Ovary (tissue), 10 donors: ENCODE measurements at regions of chr11 and their contacts with region 1.

Region 1: GRCh38 chr11:68927280-68928135 is 23.8 kb downstream of the IGHMBP2 start:
- DNase-seq: peak in 4 of 5 donors; percentile 46 to 54 (median 52)
- H3K4me3 ChIP-seq: no peak overlapping the region
- H3K27ac ChIP-seq: peak overlapping the region in 1 of 2 donors; percentile 11
- H3K4me1 ChIP-seq: no peaks in the 10 kb centered on the region
- H3K27me3 ChIP-seq: no peaks in the 10 kb centered on the region
- CTCF ChIP-seq: no peak
- EP300 ChIP-seq: no peak
- POLR2A ChIP-seq: no peak

Region 2: DNA sequence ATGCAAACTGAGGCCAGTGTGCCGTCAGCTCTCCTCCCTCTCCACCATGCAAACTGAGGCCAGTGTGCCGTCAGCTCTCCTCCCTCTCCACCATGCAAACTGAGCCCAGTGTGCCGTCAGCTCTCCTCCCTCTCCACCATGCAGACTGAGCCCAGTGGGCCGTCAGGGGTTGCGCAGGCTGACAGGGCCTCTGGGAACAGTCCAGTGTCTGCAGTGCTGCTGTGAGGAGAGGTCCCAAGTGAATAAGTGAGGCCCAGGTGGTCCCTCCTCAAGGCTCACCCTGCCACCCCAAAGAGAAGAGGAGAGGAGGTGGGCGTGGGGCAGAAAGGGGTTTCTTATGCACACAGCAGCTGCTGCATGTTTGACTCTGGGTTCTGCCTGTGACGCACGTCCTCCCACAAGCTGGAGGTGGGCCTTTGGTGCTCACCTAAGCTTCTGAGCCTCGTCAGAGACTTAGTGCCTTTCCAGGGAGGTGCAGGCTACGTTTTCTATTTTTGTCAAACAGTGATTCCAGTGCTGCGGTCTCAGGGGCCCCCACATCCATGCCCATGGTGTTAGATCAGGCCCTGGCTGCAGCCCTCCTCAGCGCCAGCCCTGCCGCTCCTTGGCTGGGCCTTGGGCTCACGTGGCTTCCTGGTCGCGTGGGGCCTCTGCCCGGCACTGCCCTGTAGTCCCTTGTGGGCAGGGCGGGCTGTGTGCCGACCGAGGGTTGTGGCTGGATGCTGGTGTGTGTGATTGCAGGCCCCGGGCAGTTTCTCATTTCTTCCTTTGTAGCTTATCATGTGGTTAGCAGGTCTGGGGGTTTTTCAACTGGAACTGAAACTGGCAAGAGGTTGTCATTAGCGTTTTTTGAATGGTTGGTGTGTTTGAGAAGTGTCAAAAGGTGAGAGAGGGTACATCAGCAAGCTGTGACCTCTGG is 128.3 kb after region 1 on chr11:
- intact Hi-C with region 1: loop called in 1 of 4 experiments (anchors 10 kb)
- DNase-seq: no peak
- H3K4me3 ChIP-seq: no peak overlapping the region
- H3K27ac ChIP-seq: no peak overlapping the region
- H3K4me1 ChIP-seq: peaks cover 6% of the 10 kb centered on the region
- H3K27me3 ChIP-seq: no peaks in the 10 kb centered on the region
- CTCF ChIP-seq: no peak
- EP300 ChIP-seq: no peak
- POLR2A ChIP-seq: no peak

Region 3: DNA sequence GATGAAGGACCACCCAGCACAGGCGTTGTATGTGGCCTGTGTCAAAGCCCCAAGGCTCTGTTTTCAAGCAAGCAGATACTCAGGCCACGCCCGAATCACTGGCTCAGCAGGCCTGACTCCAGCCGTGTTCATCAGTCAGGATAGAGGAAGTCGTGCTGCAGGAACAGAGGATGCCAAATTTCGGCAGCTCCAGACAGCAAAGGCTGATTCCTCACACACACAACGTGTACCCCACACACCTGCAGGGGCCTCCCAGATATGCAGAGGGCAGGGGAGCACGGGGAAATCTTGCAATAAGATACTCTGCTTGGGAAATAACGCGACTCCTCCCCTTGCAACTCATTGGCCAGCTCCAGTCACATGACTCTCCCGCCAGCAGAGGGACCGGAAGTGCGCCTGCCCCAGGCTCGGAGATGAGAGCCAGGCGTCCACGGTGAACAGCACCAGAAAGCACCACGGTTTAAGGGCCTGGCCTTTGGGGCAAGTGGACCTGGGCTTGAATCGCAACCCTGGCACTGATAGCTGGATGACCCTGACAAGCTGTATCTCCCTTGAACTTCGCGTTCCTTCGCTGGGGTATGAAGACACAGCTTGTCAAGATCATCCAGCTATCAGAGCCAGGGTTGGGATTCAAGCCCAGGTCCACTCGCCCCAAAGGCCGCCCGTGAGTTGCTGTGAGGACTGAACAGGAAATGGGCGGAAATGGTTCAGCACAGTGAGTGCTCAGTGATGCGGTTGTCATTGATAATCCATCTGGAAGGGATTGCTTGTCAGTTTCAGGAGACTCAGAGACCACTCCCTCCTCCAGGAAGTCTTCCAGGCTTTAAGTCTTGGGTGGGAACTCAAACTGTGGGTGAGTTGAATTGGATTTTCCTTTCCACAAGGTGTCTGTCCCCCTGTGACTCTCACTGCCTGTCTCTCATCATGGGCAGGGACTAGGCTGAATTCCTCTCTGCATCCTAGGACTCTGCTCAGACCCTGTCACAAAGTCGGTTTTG is 454.9 kb after region 1 on chr11:
- intact Hi-C with region 1: no loop called
- DNase-seq: peak in 3 of 5 donors; percentile 22 to 40 (median 34)
- H3K4me3 ChIP-seq: no peak overlapping the region
- H3K27ac ChIP-seq: no peak overlapping the region
- H3K4me1 ChIP-seq: no peaks in the 10 kb centered on the region
- H3K27me3 ChIP-seq: no peaks in the 10 kb centered on the region
- CTCF ChIP-seq: no peak
- EP300 ChIP-seq: no peak
- POLR2A ChIP-seq: no peak